Caco-2 (cell line): ENCODE measurements at regions of chr6 and their contacts with region 1.

Region 1: GRCh38 chr6:159079367-159079766 is 34.6 kb upstream of the TAGAP start:
- DNase-seq: no peak
- H3K4me3 ChIP-seq: no peak overlapping the region
- H3K4me3 Mint-ChIP-seq: no peak overlapping the region
- H3K27ac Mint-ChIP-seq: no peak overlapping the region
- H3K4me1 ChIP-seq: no peaks in the 10 kb centered on the region
- H3K4me1 Mint-ChIP-seq: no peaks in the 10 kb centered on the region
- H3K27me3 ChIP-seq: no peaks in the 10 kb centered on the region
- H3K27me3 Mint-ChIP-seq: peaks cover 22% of the 10 kb centered on the region
- CTCF ChIP-seq: no peak

Region 2: GRCh38 chr6:159324596-159324995 is 245.2 kb after region 1 on chr6:
- CTCF ChIA-PET with region 1: interaction called, 11 read pairs
- POLR2A ChIA-PET with region 1: no interaction called
- intact Hi-C with region 1: no loop called
- DNase-seq: no peak
- H3K4me3 ChIP-seq: no peak overlapping the region
- H3K4me3 Mint-ChIP-seq: no peak overlapping the region
- H3K27ac Mint-ChIP-seq: no peak overlapping the region
- H3K4me1 ChIP-seq: no peaks in the 10 kb centered on the region
- H3K4me1 Mint-ChIP-seq: no peaks in the 10 kb centered on the region
- H3K27me3 ChIP-seq: no peaks in the 10 kb centered on the region; the same call in 1 of the 2 replicates
- H3K27me3 Mint-ChIP-seq: peaks cover 9% of the 10 kb centered on the region
- CTCF ChIP-seq: no peak